Transverse colon (tissue), 4 donors: ENCODE measurements at regions of chr15 and their contacts with region 1.

Region 1: DNA sequence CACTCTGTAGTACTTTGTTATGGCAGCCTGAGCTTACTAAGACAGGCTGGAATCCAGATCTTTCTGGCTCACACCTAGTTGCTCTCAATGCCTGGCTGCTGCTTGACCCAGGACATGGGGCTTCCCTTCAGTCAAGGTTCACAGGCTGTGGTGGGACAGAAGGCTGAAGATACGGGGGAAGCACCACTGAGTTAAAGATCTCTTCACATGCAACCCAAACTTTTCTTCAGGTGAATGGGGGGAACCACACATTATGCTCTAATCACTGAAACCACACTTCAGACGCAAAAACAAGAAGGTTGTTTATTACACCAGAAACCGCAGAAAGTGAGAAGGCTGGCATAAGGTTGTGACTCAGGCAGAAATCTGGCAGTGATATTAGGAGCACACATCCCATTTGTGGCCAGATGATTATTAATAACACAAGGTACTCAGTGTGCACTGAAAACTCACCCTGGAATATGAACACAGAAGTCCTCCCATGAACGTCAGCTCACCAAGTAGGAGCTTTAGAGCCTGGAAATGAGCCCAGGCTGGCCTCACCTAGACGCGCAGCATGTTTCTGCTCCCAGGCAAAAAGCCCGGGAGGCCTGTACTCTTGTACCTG is 230.5 kb upstream of the CHRNA7 start:
- DNase-seq: no peak
- H3K4me3 ChIP-seq: no peak overlapping the region
- H3K27ac ChIP-seq: no peak overlapping the region
- H3K4me1 ChIP-seq: no peaks in the 10 kb centered on the region
- H3K27me3 ChIP-seq: no peaks in the 10 kb centered on the region
- CTCF ChIP-seq: no peak
- EP300 ChIP-seq: no peak
- POLR2A ChIP-seq: no peak

Region 2: DNA sequence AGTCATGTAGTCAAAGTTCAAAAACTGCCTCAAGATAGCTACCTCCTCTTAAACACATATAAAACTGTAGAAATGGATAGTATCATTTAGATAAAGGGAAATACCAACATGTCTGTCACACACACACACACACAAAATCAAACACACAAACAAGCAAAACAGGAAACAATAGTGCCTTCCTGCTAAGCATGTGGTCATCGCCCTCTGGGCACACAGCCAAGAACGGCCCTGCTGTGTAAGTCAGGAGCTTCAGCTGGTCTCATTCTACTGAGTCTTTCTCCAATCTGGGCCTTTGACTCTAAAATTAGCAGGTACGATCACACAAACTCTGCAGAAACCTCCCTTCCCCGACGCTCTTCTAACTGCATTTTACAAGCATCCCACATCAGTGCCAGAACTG is 41.7 kb before region 1 on chr15:
- in situ Hi-C with region 1: no loop called
- intact Hi-C with region 1: no loop called
- DNase-seq: peak; percentile 74
- H3K4me3 ChIP-seq: no peak overlapping the region
- H3K27ac ChIP-seq: no peak overlapping the region
- H3K4me1 ChIP-seq: no peaks in the 10 kb centered on the region
- H3K27me3 ChIP-seq: no peaks in the 10 kb centered on the region
- CTCF ChIP-seq: no peak
- EP300 ChIP-seq: no peak
- POLR2A ChIP-seq: no peak

Region 3: DNA sequence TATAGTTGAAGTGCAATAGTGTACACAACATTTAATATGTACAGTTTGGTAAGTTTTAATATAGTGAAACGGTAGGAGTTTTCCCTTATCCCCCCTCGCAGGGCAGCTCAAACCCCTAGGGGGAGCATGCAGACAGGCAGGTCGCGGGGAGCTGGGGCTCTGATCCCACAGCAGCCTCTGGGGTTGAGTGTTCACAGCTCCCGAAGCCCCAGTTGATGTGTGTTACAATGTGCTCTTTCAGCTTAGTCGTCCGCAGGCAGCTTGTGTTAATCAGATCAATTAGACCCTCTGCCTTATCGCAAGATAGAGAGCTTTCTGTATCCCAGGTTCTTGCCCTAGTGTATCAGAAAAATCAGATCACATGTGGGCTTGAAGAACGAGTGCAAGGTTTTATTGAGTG is 87.4 kb after region 1 on chr15:
- in situ Hi-C with region 1: loop called in 1 of 4 experiments (anchors 25 kb)
- intact Hi-C with region 1: no loop called
- DNase-seq: no peak
- H3K4me3 ChIP-seq: no peak overlapping the region
- H3K27ac ChIP-seq: no peak overlapping the region
- H3K4me1 ChIP-seq: no peaks in the 10 kb centered on the region
- H3K27me3 ChIP-seq: peaks cover 6% of the 10 kb centered on the region
- CTCF ChIP-seq: no peak
- EP300 ChIP-seq: no peak
- POLR2A ChIP-seq: no peak